ENCODE measurements at regions of chr18 and their contacts with region 1.

Region 1: GRCh38 chr18:8704361-8705279 is 736 bp upstream of the MTCL1 start:
- DNase-seq: peak; percentile 95
- H3K4me3 ChIP-seq: peak overlapping the region; percentile 49 to 93 (median 88)
- H3K27ac ChIP-seq: peak overlapping the region; percentile 95 to 96 (median 96)
- H3K4me1 ChIP-seq: peaks cover 0 to 40% (median 28%) of the 10 kb centered on the region in 4 donors
- H3K27me3 ChIP-seq: no peaks in the 10 kb centered on the region
- CTCF ChIP-seq: peak in 1 of 4 experiments; percentile 16
- EP300 ChIP-seq: peak in 1 of 4 donors; percentile 9
- POLR2A ChIP-seq: peak; percentile 58 to 61

Region 2: DNA sequence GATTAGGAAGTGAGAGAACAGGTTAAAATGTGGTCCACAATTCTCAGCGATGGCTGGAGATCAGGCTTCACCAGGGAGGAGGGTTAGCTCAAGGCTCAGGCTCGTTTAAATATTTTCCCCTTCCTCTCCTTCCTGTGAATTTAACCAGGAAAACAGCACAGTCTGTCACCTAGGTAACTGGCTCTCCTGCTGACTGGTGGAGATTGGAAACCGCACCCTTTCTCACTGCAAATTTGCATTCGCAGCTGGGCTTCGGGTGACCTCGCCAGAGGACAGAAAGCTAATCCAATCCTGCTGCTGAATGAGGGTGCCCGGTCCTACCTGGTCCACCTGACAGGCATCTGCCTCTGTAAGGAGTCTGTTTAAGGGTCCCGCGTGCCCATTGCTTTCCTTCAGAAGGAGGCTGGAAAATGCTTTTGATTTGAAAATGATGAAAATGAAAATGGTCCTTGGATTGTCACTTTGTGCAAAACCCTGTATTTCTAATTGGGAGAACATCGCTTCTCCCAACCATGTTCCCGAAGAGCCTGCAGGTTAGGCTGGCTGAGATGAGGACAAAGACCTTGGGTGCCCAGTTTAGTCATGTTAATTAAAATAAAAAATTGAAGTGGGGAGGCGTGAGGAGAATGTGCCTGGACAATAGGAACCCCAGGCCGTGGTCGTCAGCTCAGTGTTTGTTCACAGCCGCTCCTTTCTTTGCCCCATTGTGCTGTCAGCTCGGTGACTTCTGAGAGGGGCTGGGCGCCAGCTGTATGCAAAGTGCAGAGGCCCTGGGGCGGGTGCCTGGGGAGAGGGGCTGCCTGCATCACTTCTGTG is 42.7 kb before region 1 on chr18:
- intact Hi-C with region 1: no loop called
- DNase-seq: no peak
- H3K4me3 ChIP-seq: no peak overlapping the region
- H3K27ac ChIP-seq: no peak overlapping the region
- H3K4me1 ChIP-seq: no peaks in the 10 kb centered on the region
- H3K27me3 ChIP-seq: no peaks in the 10 kb centered on the region
- CTCF ChIP-seq: no peak
- EP300 ChIP-seq: no peak
- POLR2A ChIP-seq: no peak

Region 3: GRCh38 chr18:8754995-8755955 is 50.7 kb after region 1 on chr18:
- intact Hi-C with region 1: loop called (anchors 1 kb)
- DNase-seq: no peak
- H3K4me3 ChIP-seq: no peak overlapping the region
- H3K27ac ChIP-seq: peak overlapping the region in 3 of 4 donors; percentile 33 to 85 (median 43)
- H3K4me1 ChIP-seq: peaks cover 0 to 86% (median 68%) of the 10 kb centered on the region in 4 donors
- H3K27me3 ChIP-seq: no peaks in the 10 kb centered on the region
- CTCF ChIP-seq: no peak
- EP300 ChIP-seq: no peak
- POLR2A ChIP-seq: no peak

Region 4: GRCh38 chr18:8771930-8772329 is 67.3 kb after region 1 on chr18:
- intact Hi-C with region 1: loop called (anchors 2 kb)
- DNase-seq: peak; percentile 92
- H3K4me3 ChIP-seq: no peak overlapping the region
- H3K27ac ChIP-seq: peak overlapping the region in 3 of 4 donors; percentile 78 to 87 (median 84)
- H3K4me1 ChIP-seq: peaks cover 0 to 90% (median 50%) of the 10 kb centered on the region in 4 donors
- H3K27me3 ChIP-seq: no peaks in the 10 kb centered on the region
- CTCF ChIP-seq: no peak
- EP300 ChIP-seq: peak in 3 of 4 donors; percentile 7 to 62 (median 31)
- POLR2A ChIP-seq: no peak

Region 5: DNA sequence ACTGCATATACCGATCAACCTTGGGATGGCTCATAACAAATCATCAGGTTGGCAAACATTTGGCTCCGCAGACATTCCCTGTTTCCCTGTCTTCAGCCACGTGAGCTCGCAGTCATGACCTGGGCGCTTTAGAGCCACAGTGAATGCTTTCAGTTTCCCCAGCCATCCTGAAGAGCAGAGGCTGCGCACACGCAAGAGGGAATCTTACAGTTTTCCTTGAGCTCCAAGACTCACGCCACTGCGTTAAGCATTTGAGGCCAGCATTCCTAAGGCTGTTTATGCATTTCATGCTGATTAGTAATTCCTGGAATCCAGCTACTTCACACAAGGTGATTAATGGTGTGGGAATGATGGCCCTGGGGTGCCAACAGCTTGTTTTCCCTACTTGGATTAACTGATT is 95.8 kb after region 1 on chr18:
- intact Hi-C with region 1: loop called (anchors 2 kb)
- DNase-seq: no peak
- H3K4me3 ChIP-seq: peak overlapping the region in 2 of 4 donors; percentile 6 to 16
- H3K27ac ChIP-seq: peak overlapping the region; percentile 80 to 93 (median 84)
- H3K4me1 ChIP-seq: peaks cover 0 to 68% (median 57%) of the 10 kb centered on the region in 4 donors
- H3K27me3 ChIP-seq: no peaks in the 10 kb centered on the region
- CTCF ChIP-seq: no peak
- EP300 ChIP-seq: peak in 1 of 4 donors; percentile 79
- POLR2A ChIP-seq: no peak